ENCODE measurements at regions of chr5 and their contacts with region 1.

Region 1: GRCh38 chr5:59810041-59810440 is 83.5 kb downstream of the PDE4D start:
- DNase-seq: peak; percentile 60 to 61
- H3K4me3 ChIP-seq: no peak overlapping the region
- H3K4me3 Mint-ChIP-seq: peak overlapping the region; percentile 17
- H3K27ac Mint-ChIP-seq: no peak overlapping the region
- H3K4me1 ChIP-seq: 0 out of 2 replicates have a peak, but pooled peaks cover 5% of the 10 kb centered on the region
- H3K4me1 Mint-ChIP-seq: peaks cover 6% of the 10 kb centered on the region
- H3K27me3 ChIP-seq: no peaks in the 10 kb centered on the region
- H3K27me3 Mint-ChIP-seq: peaks cover 12% of the 10 kb centered on the region
- CTCF ChIP-seq: peak; percentile 89 to 94

Region 2: DNA sequence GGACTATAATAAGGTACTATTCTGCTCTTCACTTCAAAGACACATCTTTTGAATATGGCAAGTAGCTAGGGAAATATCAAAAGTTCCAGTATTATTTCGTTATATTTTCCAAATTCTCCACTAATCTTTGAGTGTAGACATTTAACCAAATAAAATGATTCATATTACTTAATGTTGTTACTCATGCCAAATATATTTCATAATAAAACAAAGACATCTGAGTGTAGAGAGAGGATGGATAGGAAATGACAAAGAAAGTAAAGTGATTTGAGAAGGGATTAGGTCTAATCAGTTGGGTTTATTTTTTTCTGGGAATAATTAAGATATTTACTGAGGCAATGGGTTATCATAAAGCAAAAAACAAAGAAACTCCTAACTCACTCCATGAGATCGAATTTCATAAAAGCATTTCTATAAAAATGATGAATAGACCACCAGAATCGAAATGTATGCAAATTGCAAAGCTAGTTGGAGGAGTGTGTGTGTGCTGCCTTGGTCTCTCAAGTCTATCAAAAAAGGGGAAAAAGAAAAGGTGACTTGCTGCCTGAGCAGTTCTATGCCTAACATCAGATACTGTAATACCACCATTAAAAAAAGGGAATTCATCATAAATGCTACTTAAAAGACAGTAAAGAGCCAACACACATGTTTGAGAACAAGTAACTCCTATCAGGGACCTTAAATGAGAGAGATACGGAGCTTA is 172.0 kb before region 1 on chr5:
- CTCF ChIA-PET with region 1: no interaction called
- POLR2A ChIA-PET with region 1: no interaction called
- intact Hi-C with region 1: no loop called
- DNase-seq: no peak
- H3K4me3 ChIP-seq: no peak overlapping the region
- H3K4me3 Mint-ChIP-seq: no peak overlapping the region
- H3K27ac Mint-ChIP-seq: no peak overlapping the region
- H3K4me1 ChIP-seq: no peaks in the 10 kb centered on the region
- H3K4me1 Mint-ChIP-seq: no peaks in the 10 kb centered on the region
- H3K27me3 ChIP-seq: no peaks in the 10 kb centered on the region
- H3K27me3 Mint-ChIP-seq: peaks cover 22% of the 10 kb centered on the region
- CTCF ChIP-seq: no peak

Region 3: DNA sequence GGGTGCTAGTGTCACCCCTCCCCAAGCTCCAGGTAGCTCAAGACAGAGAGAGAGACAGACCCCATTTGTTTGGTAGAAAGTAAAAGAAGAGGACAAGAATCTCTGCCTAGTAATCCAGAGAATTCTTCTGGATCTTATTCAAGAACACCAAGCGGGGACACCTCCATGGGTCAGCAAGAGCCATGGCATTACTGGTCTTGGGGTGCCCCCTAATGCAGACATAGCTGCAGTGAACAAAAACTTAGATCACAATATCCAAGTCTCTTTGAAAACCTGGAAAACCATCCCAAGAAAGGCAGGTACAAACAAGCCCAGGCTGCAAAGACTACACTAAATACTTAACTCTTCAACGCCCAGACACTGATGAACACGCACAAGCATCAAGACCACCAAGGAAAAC is 113.4 kb after region 1 on chr5:
- CTCF ChIA-PET with region 1: interaction called, 8 read pairs
- POLR2A ChIA-PET with region 1: no interaction called
- intact Hi-C with region 1: loop called (anchors 1 kb)
- DNase-seq: peak in 1 of 2 experiments; percentile 31
- H3K4me3 ChIP-seq: no peak overlapping the region
- H3K4me3 Mint-ChIP-seq: no peak overlapping the region
- H3K27ac Mint-ChIP-seq: no peak overlapping the region
- H3K4me1 ChIP-seq: no peaks in the 10 kb centered on the region
- H3K4me1 Mint-ChIP-seq: no peaks in the 10 kb centered on the region
- H3K27me3 ChIP-seq: no peaks in the 10 kb centered on the region
- H3K27me3 Mint-ChIP-seq: peaks cover 10% of the 10 kb centered on the region
- CTCF ChIP-seq: peak in 1 of 2 experiments; percentile 28

Region 4: GRCh38 chr5:60161340-60161934 is 351.4 kb after region 1 on chr5:
- CTCF ChIA-PET with region 1: no interaction called
- POLR2A ChIA-PET with region 1: no interaction called
- intact Hi-C with region 1: loop called (anchors 1 kb)
- DNase-seq: peak in 1 of 2 experiments; percentile 18
- H3K4me3 ChIP-seq: no peak overlapping the region
- H3K4me3 Mint-ChIP-seq: no peak overlapping the region
- H3K27ac Mint-ChIP-seq: no peak overlapping the region
- H3K4me1 ChIP-seq: no peaks in the 10 kb centered on the region
- H3K4me1 Mint-ChIP-seq: no peaks in the 10 kb centered on the region
- H3K27me3 ChIP-seq: no peaks in the 10 kb centered on the region
- H3K27me3 Mint-ChIP-seq: no peaks in the 10 kb centered on the region
- CTCF ChIP-seq: peak; percentile 55 to 63

Region 5: GRCh38 chr5:60382716-60383115 is 572.7 kb after region 1 on chr5:
- CTCF ChIA-PET with region 1: no interaction called
- POLR2A ChIA-PET with region 1: no interaction called
- intact Hi-C with region 1: loop called (anchors 2 kb)
- DNase-seq: peak in 1 of 2 experiments; percentile 18
- H3K4me3 ChIP-seq: no peak overlapping the region
- H3K4me3 Mint-ChIP-seq: no peak overlapping the region
- H3K27ac Mint-ChIP-seq: no peak overlapping the region
- H3K4me1 ChIP-seq: no peaks in the 10 kb centered on the region
- H3K4me1 Mint-ChIP-seq: no peaks in the 10 kb centered on the region
- H3K27me3 ChIP-seq: no peaks in the 10 kb centered on the region
- H3K27me3 Mint-ChIP-seq: peaks cover 12% of the 10 kb centered on the region
- CTCF ChIP-seq: peak; percentile 39

Region 6: DNA sequence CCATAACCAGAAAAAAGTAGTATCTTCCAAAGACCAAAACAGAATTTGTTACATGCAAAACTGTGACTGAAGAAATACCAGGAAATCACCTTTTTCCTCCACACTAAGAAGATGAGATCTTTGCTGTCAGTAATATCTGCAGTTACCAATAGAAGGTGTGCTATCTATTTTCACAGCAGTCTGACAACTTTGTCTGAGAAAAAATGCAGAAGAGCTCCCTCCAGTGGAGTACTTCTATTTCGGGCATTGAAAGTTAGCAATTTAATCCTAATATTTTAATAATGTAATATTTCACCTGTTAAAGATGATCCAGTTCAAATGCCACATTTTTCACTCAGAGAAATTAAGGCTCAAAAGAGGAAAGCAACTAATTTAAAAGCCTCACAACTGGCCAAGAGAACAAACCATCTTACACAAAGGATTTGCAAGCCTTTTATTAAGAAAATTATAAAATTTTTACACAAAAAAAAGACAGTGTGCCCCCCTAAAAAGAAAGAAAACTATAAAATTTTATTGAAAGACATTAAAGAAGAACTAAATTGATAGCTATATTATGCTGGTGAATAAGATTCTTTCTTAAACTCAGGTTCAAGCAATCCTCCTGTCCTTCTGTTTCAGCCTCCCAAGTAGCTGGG is 839.4 kb after region 1 on chr5:
- CTCF ChIA-PET with region 1: no interaction called
- POLR2A ChIA-PET with region 1: no interaction called
- intact Hi-C with region 1: loop called (anchors 5 kb)
- DNase-seq: peak in 1 of 2 experiments; percentile 48
- H3K4me3 ChIP-seq: no peak overlapping the region
- H3K4me3 Mint-ChIP-seq: no peak overlapping the region
- H3K27ac Mint-ChIP-seq: no peak overlapping the region
- H3K4me1 ChIP-seq: 0 out of 2 replicates have a peak, but pooled peaks cover 5% of the 10 kb centered on the region
- H3K4me1 Mint-ChIP-seq: peaks cover 15% of the 10 kb centered on the region
- H3K27me3 ChIP-seq: no peaks in the 10 kb centered on the region
- H3K27me3 Mint-ChIP-seq: no peaks in the 10 kb centered on the region
- CTCF ChIP-seq: peak; percentile 71 to 79